ENCODE measurements at regions of chr3 and their contacts with region 1.

Region 1: GRCh38 chr3:108538083-108538482 is 27.7 kb upstream of the MYH15 start:
- DNase-seq: no peak
- ATAC-seq: no peak
- H3K4me3 ChIP-seq: no peak overlapping the region
- H3K27ac ChIP-seq: no peak overlapping the region
- H3K4me1 ChIP-seq: no peaks in the 10 kb centered on the region
- H3K27me3 ChIP-seq: 0 out of 2 replicates have a peak, but pooled peaks cover 2% of the 10 kb centered on the region
- CTCF ChIP-seq: no peak

Region 2: GRCh38 chr3:109569135-109569846 is 1031.2 kb after region 1 on chr3:
- CTCF ChIA-PET with region 1: no interaction called
- POLR2A ChIA-PET with region 1: interaction called, 16 read pairs
- in situ Hi-C with region 1: no loop called
- intact Hi-C with region 1: no loop called
- DNase-seq: no peak
- ATAC-seq: no peak
- H3K4me3 ChIP-seq: no peak overlapping the region
- H3K27ac ChIP-seq: no peak overlapping the region
- H3K4me1 ChIP-seq: no peaks in the 10 kb centered on the region
- H3K27me3 ChIP-seq: no peaks in the 10 kb centered on the region
- CTCF ChIP-seq: no peak

Measured in Panc1 (cell line).